HCT116 (cell line): ENCODE measurements at regions of chr20 and their contacts with region 1.

Region 1: DNA sequence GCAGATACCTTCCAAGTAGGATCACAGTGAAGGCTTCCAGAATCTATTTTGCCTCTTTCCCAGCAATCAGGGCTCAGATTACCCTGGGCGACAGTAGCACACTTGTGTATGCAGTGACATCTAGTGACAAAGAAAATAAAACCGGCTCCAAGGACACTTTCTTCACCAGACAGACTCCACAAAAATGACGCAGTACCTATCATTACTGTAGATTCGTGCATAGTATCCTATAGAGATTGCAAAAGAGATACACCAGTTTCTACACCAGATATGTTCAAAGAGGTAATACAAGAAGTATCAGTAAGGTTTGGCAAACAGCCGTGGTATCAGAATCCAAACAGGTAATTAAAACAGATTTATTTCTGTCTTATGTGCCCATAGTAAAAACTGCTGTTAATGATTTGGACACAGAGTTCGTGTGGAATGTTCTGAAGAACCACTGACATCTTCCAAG is 600.4 kb upstream of the JAG1 start:
- DNase-seq: peak; percentile 52
- ATAC-seq: peak; percentile 94
- H3K4me3 ChIP-seq: no peak overlapping the region
- H3K27ac ChIP-seq: no peak overlapping the region
- H3K4me1 ChIP-seq: peaks cover 11 to 19% of the 10 kb centered on the region in 2 experiments; a peak in 2 of 4 replicates
- H3K27me3 ChIP-seq: no peaks in the 10 kb centered on the region
- CTCF ChIP-seq: peak; percentile 51 to 78 (median 62); a peak in 5 of 6 replicates
- POLR2A ChIP-seq: no peak
- RAD21 ChIP-seq: peak; percentile 93

Region 2: GRCh38 chr20:10469599-10469998 is 804.6 kb before region 1 on chr20:
- CTCF ChIA-PET with region 1: no interaction called
- POLR2A ChIA-PET with region 1: no interaction called
- RAD21 ChIA-PET with region 1: no interaction called
- intact Hi-C with region 1: loop called (anchors 10 kb)
- DNase-seq: peak; percentile 46
- ATAC-seq: peak; percentile 80
- H3K4me3 ChIP-seq: no peak overlapping the region
- H3K27ac ChIP-seq: peak overlapping the region; percentile 7
- H3K4me1 ChIP-seq: peaks cover 41 to 43% of the 10 kb centered on the region in 2 experiments
- H3K27me3 ChIP-seq: no peaks in the 10 kb centered on the region
- CTCF ChIP-seq: peak; percentile 38 to 68 (median 66); a peak in 5 of 6 replicates
- POLR2A ChIP-seq: no peak
- RAD21 ChIP-seq: peak; percentile 70

Region 3: DNA sequence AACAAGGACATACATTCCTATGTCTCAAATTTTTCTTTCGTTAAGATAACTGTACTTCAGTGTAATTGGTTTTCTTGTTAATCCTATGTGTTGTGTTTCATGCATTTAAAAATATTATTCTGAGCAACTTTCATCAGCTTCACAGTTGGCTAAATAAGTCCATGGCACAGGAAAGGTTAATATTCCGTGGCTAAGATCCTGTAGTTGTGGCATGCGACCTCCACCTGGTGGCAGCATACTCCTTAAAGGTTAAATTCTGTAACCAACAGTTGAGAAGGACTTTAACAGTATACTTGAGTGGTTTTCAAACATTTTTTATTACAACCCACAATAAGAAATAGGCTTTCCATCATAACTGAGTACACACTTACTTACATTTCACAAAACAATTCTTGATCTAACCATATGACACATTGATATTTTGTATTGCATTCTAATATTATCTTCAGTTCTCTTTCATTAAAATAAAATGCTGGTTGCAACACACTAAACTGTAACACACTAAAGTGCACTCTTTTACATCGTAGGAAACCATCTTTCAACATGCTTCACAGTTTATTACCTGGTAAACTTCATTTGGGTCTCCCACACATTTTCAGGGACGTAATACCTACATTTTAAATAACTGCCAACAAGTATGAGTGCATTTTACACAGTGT is 720.7 kb before region 1 on chr20:
- CTCF ChIA-PET with region 1: interaction called, 3 read pairs
- POLR2A ChIA-PET with region 1: no interaction called
- RAD21 ChIA-PET with region 1: interaction called in 1 of 2 experiments, 3 read pairs
- intact Hi-C with region 1: loop called (anchors 1 kb)
- DNase-seq: no peak
- ATAC-seq: peak; percentile 84
- H3K4me3 ChIP-seq: no peak overlapping the region
- H3K27ac ChIP-seq: no peak overlapping the region
- H3K4me1 ChIP-seq: peaks cover 56 to 60% of the 10 kb centered on the region in 2 experiments
- H3K27me3 ChIP-seq: no peaks in the 10 kb centered on the region
- CTCF ChIP-seq: peak; percentile 60 to 88 (median 80); a peak in 5 of 6 replicates
- POLR2A ChIP-seq: no peak
- RAD21 ChIP-seq: peak; percentile 90

Region 4: GRCh38 chr20:11098888-11099287 is 175.3 kb before region 1 on chr20:
- CTCF ChIA-PET with region 1: no interaction called
- POLR2A ChIA-PET with region 1: no interaction called
- RAD21 ChIA-PET with region 1: no interaction called
- intact Hi-C with region 1: loop called (anchors 5 kb)
- DNase-seq: peak; percentile 8
- ATAC-seq: peak; percentile 70
- H3K4me3 ChIP-seq: no peak overlapping the region
- H3K27ac ChIP-seq: no peak overlapping the region
- H3K4me1 ChIP-seq: no peaks in the 10 kb centered on the region
- H3K27me3 ChIP-seq: no peaks in the 10 kb centered on the region
- CTCF ChIP-seq: peak; percentile 31 to 54 (median 43); a peak in 5 of 6 replicates
- POLR2A ChIP-seq: no peak
- RAD21 ChIP-seq: peak; percentile 70